Activated CD4-positive, alpha-beta T cell treated with anti-CD3 and anti-CD28 coated beads for 36 hours (primary cell): ENCODE measurements at regions of chr9 and their contacts with region 1.

Region 1: DNA sequence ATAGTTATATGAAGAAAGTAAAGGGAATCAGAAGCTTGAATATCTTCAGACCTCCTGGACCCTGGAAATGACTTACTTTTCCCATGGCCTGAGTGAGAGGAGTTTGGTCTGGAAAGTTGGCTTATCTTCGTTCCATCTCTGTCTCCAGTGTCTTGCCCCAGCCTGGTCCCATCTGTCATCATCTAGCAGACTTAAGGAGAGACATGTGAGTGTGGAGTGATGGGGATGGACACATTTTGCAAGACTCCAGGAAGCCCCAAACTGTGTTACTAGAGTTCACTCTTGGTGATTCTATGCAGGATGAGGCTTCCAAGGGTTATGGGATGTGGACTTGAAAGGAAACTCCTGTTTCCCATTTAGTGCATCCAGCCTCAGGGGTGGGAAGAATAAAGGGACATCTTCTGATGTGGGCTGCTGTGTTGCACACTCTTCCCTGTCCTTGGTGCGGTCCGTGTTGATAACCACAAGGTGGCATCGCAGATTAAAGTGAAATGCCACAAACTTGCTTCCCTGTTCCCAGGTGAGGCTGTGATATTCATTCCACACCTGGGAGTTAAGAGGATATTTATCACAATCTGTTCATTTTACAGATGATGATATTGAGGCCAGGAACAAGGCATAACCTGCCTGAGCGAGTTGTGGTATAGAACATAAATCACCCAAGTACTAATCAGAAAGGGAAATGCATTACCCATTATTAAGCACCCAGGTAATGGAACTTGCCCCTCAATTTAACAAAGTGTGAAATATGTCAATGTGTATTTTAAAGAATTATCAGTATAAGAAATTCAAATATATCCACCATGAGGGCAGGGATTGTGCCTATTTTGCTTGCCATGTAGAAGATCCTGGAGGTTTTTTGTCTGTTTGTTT is 269.9 kb upstream of the PAPPA start:
- DNase-seq: no peak
- ATAC-seq: no peak
- H3K4me3 Mint-ChIP-seq: no peak overlapping the region
- H3K27ac Mint-ChIP-seq: no peak overlapping the region
- H3K4me1 Mint-ChIP-seq: no peaks in the 10 kb centered on the region
- H3K27me3 Mint-ChIP-seq: no peaks in the 10 kb centered on the region

Region 2: DNA sequence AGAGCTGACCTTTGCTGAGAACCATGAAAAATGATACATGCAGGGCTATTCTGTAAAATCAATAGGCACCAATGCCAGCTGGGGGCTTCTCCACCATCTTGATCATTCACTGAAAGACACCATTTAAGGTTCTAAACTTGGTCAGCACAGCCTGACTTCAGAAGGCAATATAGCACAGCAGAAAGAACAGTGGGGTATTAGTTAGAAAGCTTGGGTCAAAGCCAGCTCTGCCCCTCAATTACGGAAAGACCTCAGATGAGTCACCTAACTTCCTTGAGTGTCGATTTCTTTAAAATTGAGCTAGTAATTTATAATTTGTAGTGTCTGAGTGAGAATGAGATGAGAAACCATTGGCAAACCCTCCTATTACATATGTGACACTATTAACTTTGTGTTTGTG is 769.1 kb before region 1 on chr9:
- CTCF ChIA-PET with region 1: no interaction called
- POLR2A ChIA-PET with region 1: no interaction called
- intact Hi-C with region 1: loop called in 1 of 2 experiments (anchors 5 kb)
- DNase-seq: no peak
- ATAC-seq: no peak
- H3K4me3 Mint-ChIP-seq: no peak overlapping the region
- H3K27ac Mint-ChIP-seq: no peak overlapping the region
- H3K4me1 Mint-ChIP-seq: peaks cover 7% of the 10 kb centered on the region
- H3K27me3 Mint-ChIP-seq: peaks cover 52% of the 10 kb centered on the region

Region 3: DNA sequence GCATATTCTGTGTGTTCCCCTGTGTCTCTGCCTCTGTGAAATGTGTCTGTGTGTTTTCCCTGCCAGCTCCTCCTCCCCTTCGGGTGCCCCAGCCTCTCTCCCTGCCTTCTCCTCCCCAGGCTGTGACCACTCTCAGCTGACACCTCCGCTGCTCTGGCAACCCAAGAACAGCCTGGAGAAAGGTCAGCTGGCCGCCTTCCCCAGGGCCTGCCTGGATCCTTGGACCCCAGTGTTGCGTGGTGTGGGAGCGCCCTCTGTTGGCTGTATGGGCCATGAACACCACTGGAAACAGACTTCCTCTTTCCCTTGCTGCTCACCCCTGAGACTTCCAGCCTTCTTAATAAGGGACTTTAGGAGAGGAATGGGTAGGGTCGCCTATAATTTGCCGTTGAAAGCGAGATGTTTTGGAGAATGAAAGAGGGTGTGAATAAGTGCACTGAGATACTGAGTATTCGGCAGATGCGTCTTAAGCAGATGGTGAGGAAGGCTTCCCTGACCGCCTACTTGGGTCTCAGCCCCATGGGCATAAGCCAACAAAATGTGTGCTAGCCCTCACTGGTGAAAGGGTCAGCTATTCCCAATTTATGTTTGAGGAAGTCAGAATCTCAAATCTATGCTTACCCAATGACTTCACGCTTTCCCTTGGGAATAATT is 688.5 kb after region 1 on chr9:
- CTCF ChIA-PET with region 1: no interaction called
- POLR2A ChIA-PET with region 1: no interaction called
- intact Hi-C with region 1: loop called in 1 of 2 experiments (anchors 1 kb)
- DNase-seq: peak; percentile 64
- ATAC-seq: no peak
- H3K4me3 Mint-ChIP-seq: no peak overlapping the region
- H3K27ac Mint-ChIP-seq: no peak overlapping the region
- H3K4me1 Mint-ChIP-seq: no peaks in the 10 kb centered on the region
- H3K27me3 Mint-ChIP-seq: no peaks in the 10 kb centered on the region

Region 4: GRCh38 chr9:116661037-116661954 is 777.6 kb after region 1 on chr9:
- CTCF ChIA-PET with region 1: no interaction called
- POLR2A ChIA-PET with region 1: no interaction called
- intact Hi-C with region 1: loop called in 1 of 2 experiments (anchors 10 kb)
- DNase-seq: no peak
- ATAC-seq: peak; percentile 58
- H3K4me3 Mint-ChIP-seq: no peak overlapping the region
- H3K27ac Mint-ChIP-seq: no peak overlapping the region
- H3K4me1 Mint-ChIP-seq: no peaks in the 10 kb centered on the region
- H3K27me3 Mint-ChIP-seq: no peaks in the 10 kb centered on the region